ENCODE measurements at regions of chr11 and their contacts with region 1.

Region 1: GRCh38 chr11:122628810-122629555 is 26.5 kb upstream of the UBASH3B start:
- DNase-seq: peak; percentile 77
- H3K4me3 Mint-ChIP-seq: no peak overlapping the region
- H3K27ac Mint-ChIP-seq: no peak overlapping the region
- H3K4me1 Mint-ChIP-seq: peaks cover 13% of the 10 kb centered on the region
- H3K27me3 Mint-ChIP-seq: peaks cover 20% of the 10 kb centered on the region

Region 2: DNA sequence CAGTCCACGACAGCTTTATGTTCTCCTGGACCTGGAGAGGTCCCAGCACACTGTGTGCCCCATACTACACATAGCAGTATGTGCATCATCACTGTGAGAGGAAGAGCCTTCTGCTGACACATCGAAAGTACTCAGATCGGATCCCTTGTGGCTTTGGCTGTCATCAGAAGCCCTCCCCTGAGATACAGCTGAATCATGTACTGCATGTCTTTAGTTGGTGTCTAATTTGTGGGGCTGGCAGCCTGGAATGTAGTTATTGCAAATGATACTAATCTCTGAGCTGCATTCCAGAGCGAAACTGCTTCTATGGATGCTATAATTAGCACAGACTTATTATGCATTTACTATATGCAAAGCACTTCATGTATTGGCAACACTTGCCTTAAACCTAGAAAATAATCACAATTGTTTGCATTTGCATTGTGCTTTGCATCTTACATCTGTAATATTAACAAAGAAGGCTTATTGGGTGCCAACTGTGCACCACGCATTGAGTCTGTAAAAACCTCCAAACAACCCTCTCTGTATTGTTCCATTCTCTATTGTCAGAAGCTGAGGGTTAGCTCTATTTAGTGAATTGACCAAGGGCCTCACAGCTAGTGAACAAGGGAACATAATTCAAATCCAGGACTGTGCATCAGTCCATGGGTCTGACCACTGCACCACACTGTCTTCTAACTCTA is 120.2 kb after region 1 on chr11:
- CTCF ChIA-PET with region 1: interaction called, 97 read pairs
- DNase-seq: peak; percentile 64
- H3K4me3 Mint-ChIP-seq: no peak overlapping the region
- H3K27ac Mint-ChIP-seq: no peak overlapping the region
- H3K4me1 Mint-ChIP-seq: peaks cover 31% of the 10 kb centered on the region
- H3K27me3 Mint-ChIP-seq: peaks cover 6% of the 10 kb centered on the region

Region 3: DNA sequence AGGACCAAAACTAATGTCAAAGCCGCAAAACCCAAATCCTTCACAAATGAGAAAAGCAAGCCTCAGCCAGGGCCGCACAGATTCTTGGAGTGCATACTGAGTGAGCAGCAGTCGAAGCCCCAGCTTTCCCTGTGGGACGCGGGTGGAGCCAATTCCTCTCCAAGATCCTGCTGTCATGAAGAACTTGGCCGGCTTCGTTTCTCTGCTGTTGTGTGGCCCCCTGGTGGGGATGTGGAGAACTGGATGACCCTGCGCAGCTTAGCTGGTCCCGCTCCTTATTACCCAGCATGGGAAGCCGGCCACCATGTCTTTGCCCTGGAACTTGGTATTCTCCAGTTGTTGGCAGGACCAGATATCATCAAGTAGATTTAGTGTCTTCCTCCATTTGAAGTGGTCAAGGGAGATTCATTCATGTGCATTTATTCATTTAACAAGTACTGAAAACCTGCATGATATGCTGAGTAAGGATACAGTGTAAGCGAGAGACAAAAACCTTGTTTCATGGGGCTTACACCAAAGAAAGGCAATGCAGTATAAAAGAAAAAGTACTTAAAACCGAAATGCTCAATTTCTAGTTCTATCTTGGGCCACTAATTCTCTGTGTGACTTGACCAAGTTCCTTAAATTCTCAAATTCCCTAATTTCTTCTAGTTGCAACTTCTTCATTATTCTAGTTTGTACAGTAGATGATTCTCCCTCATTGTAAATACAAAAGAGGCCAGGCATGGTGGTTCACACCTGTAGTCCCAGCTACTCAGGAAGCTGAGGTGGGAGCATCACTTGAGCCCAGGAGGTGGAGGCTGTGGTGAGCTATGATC is 152.6 kb after region 1 on chr11:
- CTCF ChIA-PET with region 1: interaction called, 38 read pairs
- DNase-seq: peak; percentile 80
- H3K4me3 Mint-ChIP-seq: no peak overlapping the region
- H3K27ac Mint-ChIP-seq: no peak overlapping the region
- H3K4me1 Mint-ChIP-seq: peaks cover 3% of the 10 kb centered on the region
- H3K27me3 Mint-ChIP-seq: no peaks in the 10 kb centered on the region

Region 4: GRCh38 chr11:122796128-122796717 is 167.2 kb after region 1 on chr11:
- CTCF ChIA-PET with region 1: interaction called, 11 read pairs
- DNase-seq: peak; percentile 79
- H3K4me3 Mint-ChIP-seq: no peak overlapping the region
- H3K27ac Mint-ChIP-seq: no peak overlapping the region
- H3K4me1 Mint-ChIP-seq: no peaks in the 10 kb centered on the region
- H3K27me3 Mint-ChIP-seq: no peaks in the 10 kb centered on the region

Measured in activated naive CD4-positive, alpha-beta T cell treated with anti-CD3 and anti-CD28 coated beads, Interleukin-2, amount 10 ng/mL, durations not matched to agents 7 days and 5 days (primary cell).